ENCODE measurements at regions of chr7 and their contacts with region 1.

Region 1: GRCh38 chr7:123635551-123636359 is 19.9 kb upstream of the LMOD2 start:
- DNase-seq: peak in 1 of 2 experiments; percentile 24
- H3K4me3 ChIP-seq: no peak overlapping the region
- H3K4me3 Mint-ChIP-seq: no peak overlapping the region
- H3K27ac Mint-ChIP-seq: no peak overlapping the region
- H3K4me1 ChIP-seq: peaks cover 11% of the 10 kb centered on the region
- H3K4me1 Mint-ChIP-seq: peaks cover 22% of the 10 kb centered on the region
- H3K27me3 ChIP-seq: no peaks in the 10 kb centered on the region
- H3K27me3 Mint-ChIP-seq: no peaks in the 10 kb centered on the region
- CTCF ChIP-seq: peak; percentile 42 to 69

Region 2: GRCh38 chr7:123548406-123548805 is 87.3 kb before region 1 on chr7:
- CTCF ChIA-PET with region 1: no interaction called
- POLR2A ChIA-PET with region 1: no interaction called
- intact Hi-C with region 1: no loop called
- DNase-seq: no peak
- H3K4me3 ChIP-seq: no peak overlapping the region
- H3K4me3 Mint-ChIP-seq: no peak overlapping the region
- H3K27ac Mint-ChIP-seq: no peak overlapping the region
- H3K4me1 ChIP-seq: no peaks in the 10 kb centered on the region
- H3K4me1 Mint-ChIP-seq: no peaks in the 10 kb centered on the region
- H3K27me3 ChIP-seq: no peaks in the 10 kb centered on the region
- H3K27me3 Mint-ChIP-seq: no peaks in the 10 kb centered on the region
- CTCF ChIP-seq: no peak

Region 3: GRCh38 chr7:123580406-123581161 is 55.2 kb before region 1 on chr7:
- CTCF ChIA-PET with region 1: no interaction called
- POLR2A ChIA-PET with region 1: no interaction called
- intact Hi-C with region 1: loop called (anchors 1 kb)
- DNase-seq: peak; percentile 52 to 64
- H3K4me3 ChIP-seq: no peak overlapping the region
- H3K4me3 Mint-ChIP-seq: peak overlapping the region; percentile 58
- H3K27ac Mint-ChIP-seq: no peak overlapping the region
- H3K4me1 ChIP-seq: no peaks in the 10 kb centered on the region
- H3K4me1 Mint-ChIP-seq: peaks cover 5% of the 10 kb centered on the region
- H3K27me3 ChIP-seq: no peaks in the 10 kb centered on the region
- H3K27me3 Mint-ChIP-seq: peaks cover 4% of the 10 kb centered on the region
- CTCF ChIP-seq: peak; percentile 88 to 92

Region 4: DNA sequence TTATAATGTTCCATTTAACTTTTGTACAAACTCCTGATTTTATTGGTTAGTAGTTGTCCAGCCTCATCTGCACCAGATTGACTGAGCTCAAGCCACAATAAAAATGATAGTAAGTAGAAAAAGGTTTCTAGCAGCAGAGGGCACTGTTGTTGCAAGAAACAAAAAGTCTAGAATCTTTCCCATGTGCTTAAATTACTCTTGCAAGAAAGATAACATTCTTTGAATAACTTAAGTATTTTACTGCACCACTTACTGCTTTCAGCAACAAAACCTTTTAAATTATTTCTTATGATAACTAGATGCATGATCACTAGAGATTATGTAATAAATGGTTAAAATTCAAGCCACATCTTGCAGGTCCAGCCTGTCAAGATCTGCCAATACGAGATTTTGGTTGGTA is 46.9 kb after region 1 on chr7:
- CTCF ChIA-PET with region 1: interaction called, 4 read pairs
- POLR2A ChIA-PET with region 1: no interaction called
- intact Hi-C with region 1: loop called (anchors 1 kb)
- DNase-seq: peak in 1 of 2 experiments; percentile 54
- H3K4me3 ChIP-seq: no peak overlapping the region
- H3K4me3 Mint-ChIP-seq: no peak overlapping the region
- H3K27ac Mint-ChIP-seq: no peak overlapping the region
- H3K4me1 ChIP-seq: peaks cover 19% of the 10 kb centered on the region
- H3K4me1 Mint-ChIP-seq: no peaks in the 10 kb centered on the region
- H3K27me3 ChIP-seq: no peaks in the 10 kb centered on the region
- H3K27me3 Mint-ChIP-seq: no peaks in the 10 kb centered on the region
- CTCF ChIP-seq: peak; percentile 47 to 61

Region 5: GRCh38 chr7:123748734-123749536 is 113.2 kb after region 1 on chr7 and contains the start of gene WASL:
- CTCF ChIA-PET with region 1: no interaction called
- POLR2A ChIA-PET with region 1: no interaction called
- intact Hi-C with region 1: loop called (anchors 5 kb)
- DNase-seq: peak; percentile 93 to 96
- H3K4me3 ChIP-seq: peak within 1 kb of the TSS; percentile 100
- H3K4me3 Mint-ChIP-seq: peak within 1 kb of the TSS; percentile 100
- H3K27ac Mint-ChIP-seq: peak within 1 kb of the TSS; percentile 98
- H3K4me1 ChIP-seq: peaks cover 20% of the 10 kb centered on the region
- H3K4me1 Mint-ChIP-seq: peaks cover 30% of the 10 kb centered on the region
- H3K27me3 ChIP-seq: no peaks in the 10 kb centered on the region
- H3K27me3 Mint-ChIP-seq: no peaks in the 10 kb centered on the region
- CTCF ChIP-seq: no peak
- total RNA-seq, gene WASL: 42.3 TPM in 2 replicates

Region 6: GRCh38 chr7:123871998-123872867 is 236.5 kb after region 1 on chr7:
- CTCF ChIA-PET with region 1: interaction called, 10 read pairs
- POLR2A ChIA-PET with region 1: no interaction called
- intact Hi-C with region 1: loop called (anchors 1 kb)
- DNase-seq: peak; percentile 68 to 70
- H3K4me3 ChIP-seq: no peak overlapping the region
- H3K4me3 Mint-ChIP-seq: no peak overlapping the region
- H3K27ac Mint-ChIP-seq: no peak overlapping the region
- H3K4me1 ChIP-seq: no peaks in the 10 kb centered on the region
- H3K4me1 Mint-ChIP-seq: no peaks in the 10 kb centered on the region
- H3K27me3 ChIP-seq: no peaks in the 10 kb centered on the region
- H3K27me3 Mint-ChIP-seq: peaks cover 2% of the 10 kb centered on the region
- CTCF ChIP-seq: peak; percentile 77 to 80

Measured in Caco-2 (cell line).